ENCODE measurements at regions of chr20 and their contacts with region 1.

Region 1: GRCh38 chr20:56247948-56248782 is at the start of gene MC3R:
- DNase-seq: peak; percentile 27 to 74
- H3K4me3 ChIP-seq: no peak within 1 kb of the TSS
- H3K27ac ChIP-seq: no peak within 1 kb of the TSS
- H3K4me1 ChIP-seq: no peaks in the 10 kb centered on the region
- H3K27me3 ChIP-seq: peaks cover 0 to 16% (median 7%) of the 10 kb centered on the region in 4 experiments; a peak in 3 of 7 replicates
- CTCF ChIP-seq: peak; percentile 68 to 89 (median 83)
- EP300 ChIP-seq: no peak
- POLR2A ChIP-seq: no peak
- RAD21 ChIP-seq: peak; percentile 59 to 62
- total RNA-seq, gene MC3R: not detected in 2 replicates

Region 2: DNA sequence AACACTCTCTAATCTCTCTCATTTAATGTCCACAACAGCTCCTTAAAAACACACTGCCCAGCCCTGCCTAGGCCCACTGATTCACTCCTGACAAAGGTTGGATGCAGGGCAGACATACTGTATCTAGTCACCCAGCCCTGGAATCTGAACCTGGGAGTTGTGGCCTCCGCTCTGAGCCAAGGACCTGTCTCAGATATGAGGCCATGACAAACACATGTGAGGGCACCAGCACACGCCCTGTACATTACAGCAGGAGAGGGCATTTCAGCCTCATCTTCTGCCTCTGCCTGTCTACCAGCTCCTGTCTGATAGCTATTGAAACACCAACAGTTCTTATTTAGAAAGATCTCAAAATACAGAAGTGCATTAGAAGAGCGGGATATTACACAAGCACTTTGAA is 13.4 kb before region 1 on chr20:
- CTCF ChIA-PET with region 1: interaction called, 10 read pairs
- POLR2A ChIA-PET with region 1: no interaction called
- DNase-seq: no peak
- H3K4me3 ChIP-seq: no peak overlapping the region
- H3K27ac ChIP-seq: no peak overlapping the region
- H3K4me1 ChIP-seq: no peaks in the 10 kb centered on the region
- H3K27me3 ChIP-seq: no peaks in the 10 kb centered on the region
- CTCF ChIP-seq: no peak
- EP300 ChIP-seq: no peak
- POLR2A ChIP-seq: no peak
- RAD21 ChIP-seq: no peak